H1 (cell line): ENCODE measurements at regions of chr3 and their contacts with region 1.

Region 1: DNA sequence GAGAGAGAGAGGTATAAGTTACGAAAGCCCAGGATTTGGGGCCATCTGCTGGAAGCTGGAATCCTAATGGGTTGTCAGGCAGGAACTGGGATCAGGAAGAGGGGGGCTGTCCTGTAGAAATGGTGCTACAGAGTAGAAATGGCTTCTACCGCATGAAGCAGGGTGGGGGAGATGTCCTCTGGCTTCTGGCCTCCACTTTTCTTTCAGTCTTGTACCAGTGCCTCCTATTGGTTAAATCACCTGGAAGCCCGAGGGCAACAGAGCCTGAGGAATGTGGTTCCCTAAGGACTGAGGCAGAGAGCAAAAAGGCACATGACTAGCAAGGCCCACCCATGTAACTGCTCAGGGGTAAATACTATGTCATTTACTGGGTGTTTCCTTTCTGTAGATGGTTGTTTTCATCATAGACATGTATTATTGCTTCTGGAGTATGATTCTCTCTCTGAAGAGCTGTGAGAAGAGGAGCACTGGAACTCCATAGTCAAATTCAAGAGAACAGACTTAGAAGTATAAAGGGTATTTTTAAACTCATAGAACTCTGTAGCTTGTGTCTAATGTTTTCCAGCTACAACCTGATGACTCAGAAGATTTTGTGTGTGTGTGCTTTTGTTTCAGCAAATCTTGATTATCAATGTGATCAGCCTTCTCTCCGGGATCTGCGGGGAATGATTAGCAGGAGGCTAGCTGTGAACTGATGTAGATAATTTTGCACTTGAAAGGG is 20.2 kb upstream of the MITF start:
- DNase-seq: peak; percentile 2 to 48
- H3K4me3 ChIP-seq: no peak overlapping the region
- H3K27ac ChIP-seq: no peak overlapping the region
- H3K4me1 ChIP-seq: peaks cover 0 to 5% (median 2%) of the 10 kb centered on the region in 4 experiments; a peak in 3 of 7 replicates
- H3K27me3 ChIP-seq: no peaks in the 10 kb centered on the region
- CTCF ChIP-seq: peak in 1 of 3 experiments; percentile 14; a peak in 2 of 4 replicates
- EP300 ChIP-seq: no peak
- POLR2A ChIP-seq: no peak
- RAD21 ChIP-seq: peak; percentile 38 to 49; a peak in 3 of 4 replicates

Region 2: GRCh38 chr3:69691860-69692259 is 27.2 kb before region 1 on chr3:
- CTCF ChIA-PET with region 1: interaction called, 15 read pairs
- POLR2A ChIA-PET with region 1: interaction called, 4 read pairs
- DNase-seq: no peak
- H3K4me3 ChIP-seq: no peak overlapping the region
- H3K27ac ChIP-seq: no peak overlapping the region
- H3K4me1 ChIP-seq: peaks cover 0 to 2% (median 0%) of the 10 kb centered on the region in 4 experiments; a peak in 1 of 7 replicates
- H3K27me3 ChIP-seq: peaks cover 0 to 3% (median 2%) of the 10 kb centered on the region in 4 experiments; a peak in 5 of 7 replicates
- CTCF ChIP-seq: no peak
- EP300 ChIP-seq: no peak
- POLR2A ChIP-seq: no peak
- RAD21 ChIP-seq: no peak

Region 3: GRCh38 chr3:69735893-69736292 is 16.9 kb after region 1 on chr3:
- CTCF ChIA-PET with region 1: interaction called, 12 read pairs
- POLR2A ChIA-PET with region 1: interaction called, 5 read pairs
- DNase-seq: no peak
- H3K4me3 ChIP-seq: no peak overlapping the region
- H3K27ac ChIP-seq: no peak overlapping the region
- H3K4me1 ChIP-seq: peaks cover 0 to 5% (median 0%) of the 10 kb centered on the region in 4 experiments; a peak in 3 of 7 replicates
- H3K27me3 ChIP-seq: peaks cover 0 to 22% (median 14%) of the 10 kb centered on the region in 4 experiments; a peak in 5 of 7 replicates
- CTCF ChIP-seq: no peak
- EP300 ChIP-seq: no peak
- POLR2A ChIP-seq: no peak
- RAD21 ChIP-seq: no peak